Mammary epithelial cell (primary cell): ENCODE measurements at regions of chr17 and their contacts with region 1.

Region 1: DNA sequence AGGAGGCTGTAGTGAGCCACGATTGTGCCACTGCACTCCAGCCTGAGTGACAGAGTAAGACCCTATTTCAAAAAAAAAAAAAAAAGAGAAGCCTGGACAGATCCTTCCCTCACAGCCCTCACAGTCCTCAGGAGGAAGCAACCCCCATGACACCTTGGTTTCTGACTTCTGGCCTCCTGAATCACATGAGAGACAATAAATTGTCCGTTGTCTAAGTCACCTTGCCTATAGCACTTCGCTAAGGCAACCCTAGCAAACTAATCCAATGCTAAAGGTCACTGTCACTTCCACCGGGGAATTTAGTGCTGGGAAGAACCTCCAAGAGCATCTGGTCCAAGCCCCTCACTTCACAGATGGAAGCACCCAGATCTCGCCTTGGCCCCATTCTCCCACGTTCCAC is 18.9 kb upstream of the SLC39A11 start:
- DNase-seq: no peak
- H3K4me3 ChIP-seq: no peak overlapping the region
- H3K27ac ChIP-seq: no peak overlapping the region
- H3K4me1 ChIP-seq: no peaks in the 10 kb centered on the region
- H3K27me3 ChIP-seq: no peaks in the 10 kb centered on the region
- CTCF ChIP-seq: no peak

Region 2: GRCh38 chr17:73013816-73014663 is 97.3 kb before region 1 on chr17:
- CTCF ChIA-PET with region 1: no interaction called
- dilution Hi-C with region 1: loop called (anchors 5 kb)
- in situ Hi-C with region 1: no loop called
- intact Hi-C with region 1: no loop called
- DNase-seq: no peak
- H3K4me3 ChIP-seq: no peak overlapping the region
- H3K27ac ChIP-seq: no peak overlapping the region
- H3K4me1 ChIP-seq: no peaks in the 10 kb centered on the region
- H3K27me3 ChIP-seq: no peaks in the 10 kb centered on the region
- CTCF ChIP-seq: no peak

Region 3: DNA sequence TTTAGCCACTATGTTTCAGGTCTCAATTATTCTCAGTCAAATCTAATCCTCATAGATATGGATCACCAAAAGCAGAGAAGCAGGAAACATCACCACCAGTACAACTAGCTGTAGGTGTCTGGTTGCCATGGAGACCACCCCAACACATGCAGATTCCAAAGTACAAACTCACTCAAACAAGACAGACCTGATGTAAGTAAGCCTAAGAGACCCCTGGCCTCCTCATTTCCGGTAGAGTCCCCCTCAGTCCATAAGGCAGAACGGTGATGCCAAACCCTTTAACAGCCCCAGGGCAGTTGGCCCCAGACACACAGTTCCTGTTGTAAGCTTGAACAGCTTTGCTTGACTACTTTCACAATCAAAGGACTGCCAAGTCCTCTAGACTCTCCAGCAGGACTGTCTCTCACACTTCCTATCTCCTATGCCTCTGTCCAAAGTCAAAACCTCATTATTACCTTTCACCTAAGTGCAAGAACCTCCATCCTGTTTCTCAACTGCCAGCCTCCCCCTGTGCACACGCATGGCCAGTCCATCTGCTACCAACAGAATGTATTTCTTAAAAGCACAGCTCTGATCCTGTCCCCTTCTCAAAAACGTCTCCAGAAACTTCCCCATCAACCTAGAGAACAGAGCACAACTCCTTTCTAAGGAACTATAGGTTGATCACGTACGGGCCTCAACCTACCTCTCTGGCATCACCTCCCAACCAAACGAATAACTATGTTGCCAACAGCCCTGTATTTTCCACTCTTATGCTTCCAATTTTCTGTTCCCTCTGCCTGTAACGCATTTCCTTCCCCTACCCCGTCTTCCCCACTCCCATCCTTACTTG is 42.8 kb before region 1 on chr17:
- CTCF ChIA-PET with region 1: no interaction called
- dilution Hi-C with region 1: loop called (anchors 5 kb)
- in situ Hi-C with region 1: no loop called
- intact Hi-C with region 1: no loop called
- DNase-seq: peak; percentile 77
- H3K4me3 ChIP-seq: no peak overlapping the region
- H3K27ac ChIP-seq: no peak overlapping the region
- H3K4me1 ChIP-seq: no peaks in the 10 kb centered on the region
- H3K27me3 ChIP-seq: no peaks in the 10 kb centered on the region
- CTCF ChIP-seq: no peak

Region 4: GRCh38 chr17:73132085-73132492 is 20.7 kb after region 1 on chr17:
- CTCF ChIA-PET with region 1: no interaction called
- dilution Hi-C with region 1: no loop called
- in situ Hi-C with region 1: no loop called
- intact Hi-C with region 1: no loop called
- DNase-seq: no peak
- H3K4me3 ChIP-seq: no peak overlapping the region
- H3K27ac ChIP-seq: no peak overlapping the region
- H3K4me1 ChIP-seq: no peaks in the 10 kb centered on the region
- H3K27me3 ChIP-seq: no peaks in the 10 kb centered on the region
- CTCF ChIP-seq: no peak